ENCODE measurements at regions of chr3 and their contacts with region 1.

Region 1: DNA sequence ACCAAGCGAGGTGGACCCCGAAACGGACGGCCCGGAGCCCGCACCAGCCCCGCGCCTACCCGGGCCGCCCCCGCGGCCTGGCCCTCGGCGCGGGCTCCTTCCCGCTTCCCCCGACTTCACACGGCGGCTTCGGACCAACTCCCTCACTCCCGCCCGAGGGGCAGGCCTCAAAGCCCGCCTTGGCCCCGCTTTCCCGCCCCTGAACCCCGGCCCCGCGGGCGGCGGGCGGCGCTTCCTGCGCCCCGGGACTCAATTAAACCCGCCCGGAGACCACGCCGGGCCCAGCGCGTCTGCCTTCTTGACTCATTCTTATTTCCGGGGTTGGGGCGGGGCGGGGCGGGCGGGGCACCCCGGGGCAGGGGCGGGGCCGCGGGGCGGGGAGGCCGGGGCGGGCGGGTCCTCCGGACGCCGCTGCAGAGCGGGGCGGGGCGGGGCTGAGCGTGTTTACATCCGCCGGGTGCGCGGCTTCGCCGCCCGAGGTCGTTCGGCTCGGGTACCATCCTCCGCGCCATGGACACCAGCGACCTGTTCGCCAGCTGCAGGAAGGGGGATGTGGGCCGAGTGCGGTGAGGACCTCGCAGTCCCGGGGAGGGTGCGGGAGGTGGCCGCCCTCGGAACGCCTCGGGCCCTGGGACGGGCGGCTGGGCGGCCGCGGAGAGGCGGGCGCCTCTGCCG is at the start of gene ABTB1:
- DNase-seq: peak; percentile 86 to 93 (median 89)
- ATAC-seq: peak; percentile 67 to 92 (median 86)
- H3K4me3 ChIP-seq: peak within 1 kb of the TSS; percentile 80 to 100 (median 93)
- H3K27ac ChIP-seq: peak within 1 kb of the TSS; percentile 57 to 97 (median 93)
- H3K4me1 ChIP-seq: peaks cover 2 to 33% (median 22%) of the 10 kb centered on the region in 12 donors
- H3K27me3 ChIP-seq: no peaks in the 10 kb centered on the region
- CTCF ChIP-seq: no peak
- POLR2A ChIP-seq: peak in 1 of 2 donors; percentile 82
- total RNA-seq, gene ABTB1: 15.4 to 39.3 (median 30.9) TPM

Region 2: DNA sequence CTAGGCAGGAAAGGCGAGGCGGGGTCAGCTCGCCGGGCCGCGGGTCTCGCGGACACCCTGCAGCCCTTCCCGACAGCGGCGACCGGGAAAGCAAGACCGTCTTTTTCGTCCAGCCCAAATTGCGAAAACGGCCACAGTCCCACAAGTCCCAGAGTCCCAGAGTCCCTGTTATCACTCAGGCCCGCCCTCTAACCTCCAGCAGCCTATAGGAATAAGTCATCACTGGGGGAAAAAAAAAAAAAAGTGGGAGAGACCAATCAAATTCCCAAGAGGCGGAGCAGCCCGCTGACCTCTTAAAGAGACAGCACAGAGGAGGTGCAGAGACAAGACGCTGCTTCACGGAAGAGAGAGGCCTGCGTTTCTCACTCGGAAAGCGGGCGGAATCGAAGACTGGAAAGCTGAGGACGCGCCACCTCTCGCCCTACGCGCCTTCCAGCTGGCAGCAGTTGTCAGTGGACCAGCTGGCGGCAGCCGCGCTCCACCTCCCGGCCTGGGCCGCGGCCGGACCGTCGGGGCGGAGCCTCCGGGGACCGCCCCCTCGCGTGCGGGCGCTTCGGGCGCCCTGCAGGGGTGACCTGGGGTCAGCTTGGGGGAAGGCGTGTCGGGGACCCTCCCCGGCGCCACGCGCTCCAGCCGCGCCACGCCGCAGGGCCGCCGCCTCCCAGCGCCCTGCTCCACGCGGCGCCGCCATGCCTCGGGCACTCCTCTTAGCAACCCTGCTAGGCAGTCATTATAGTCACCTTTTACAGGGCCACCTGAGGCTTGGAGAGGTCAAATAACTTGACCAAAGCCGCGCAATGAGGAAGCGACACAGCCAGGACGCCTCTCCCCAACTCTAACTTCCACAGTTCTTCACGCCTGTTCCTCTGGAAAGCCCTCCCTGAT is 81.8 kb before region 1 on chr3 and contains the start of gene TPRA1:
- intact Hi-C with region 1: loop called in 1 of 10 experiments (anchors 10 kb)
- DNase-seq: peak; percentile 91 to 96 (median 93)
- ATAC-seq: peak; percentile 92 to 96 (median 94)
- H3K4me3 ChIP-seq: peak within 1 kb of the TSS; percentile 77 to 99 (median 96)
- H3K27ac ChIP-seq: peak within 1 kb of the TSS; percentile 85 to 97 (median 94)
- H3K4me1 ChIP-seq: peaks cover 0 to 48% (median 34%) of the 10 kb centered on the region in 12 donors
- H3K27me3 ChIP-seq: no peaks in the 10 kb centered on the region
- CTCF ChIP-seq: peak in 7 of 12 donors; percentile 14 to 54 (median 41)
- POLR2A ChIP-seq: peak in 1 of 2 donors; percentile 79
- total RNA-seq, gene TPRA1: 13.4 to 29.0 (median 20.4) TPM

Region 3: GRCh38 chr3:128051837-128052594 is 379.4 kb after region 1 on chr3 and contains the start of gene SEC61A1:
- intact Hi-C with region 1: loop called in 1 of 10 experiments (anchors 10 kb)
- DNase-seq: peak; percentile 95 to 98 (median 96)
- ATAC-seq: peak; percentile 95 to 98 (median 98)
- H3K4me3 ChIP-seq: peak within 1 kb of the TSS; percentile 72 to 99 (median 96)
- H3K27ac ChIP-seq: peak within 1 kb of the TSS; percentile 77 to 98 (median 94)
- H3K4me1 ChIP-seq: peaks cover 10 to 46% (median 37%) of the 10 kb centered on the region in 12 donors
- H3K27me3 ChIP-seq: no peaks in the 10 kb centered on the region
- CTCF ChIP-seq: no peak
- POLR2A ChIP-seq: peak; percentile 61 to 77
- total RNA-seq, gene SEC61A1: 52.7 to 116 (median 78.2) TPM

Measured in heart left ventricle (tissue), 16 donors.